HEK293T (cell line): ENCODE measurements at regions of chr7 and their contacts with region 1.

Region 1: GRCh38 chr7:25849500-25850184 is 302.4 kb upstream of the NFE2L3 start:
- DNase-seq: no peak

Region 2: DNA sequence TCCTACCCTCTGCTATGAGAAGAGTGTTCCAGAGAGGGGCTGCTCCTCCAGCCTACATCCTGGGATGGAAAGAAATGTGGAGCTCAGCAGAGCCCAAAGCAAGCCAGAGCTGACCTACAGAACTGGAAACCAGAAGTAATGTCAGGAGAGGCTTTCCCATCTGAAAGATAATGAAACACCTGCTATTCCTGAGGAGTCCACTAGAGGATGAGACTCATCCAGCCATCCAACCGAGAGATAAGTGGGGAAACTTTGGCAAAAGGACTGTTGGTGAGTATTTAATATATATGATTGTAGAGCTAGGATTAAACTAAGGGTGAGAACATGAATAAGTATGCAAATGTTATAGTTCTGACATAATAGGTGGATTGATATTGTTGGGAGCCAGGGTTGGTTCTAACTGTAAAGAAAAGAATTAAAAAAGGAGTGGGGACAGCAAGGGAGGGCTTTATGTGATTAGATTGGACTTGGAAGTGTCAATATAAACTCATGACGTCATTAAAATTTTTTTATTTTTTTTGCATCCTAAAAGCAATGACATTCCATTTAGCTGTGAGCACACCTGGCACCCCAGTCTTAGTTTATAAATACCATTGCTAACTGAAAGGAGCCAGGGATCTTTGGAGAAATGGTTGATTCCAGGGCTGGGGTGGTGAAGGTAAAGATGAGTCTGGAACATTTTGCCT is 10.4 kb before region 1 on chr7:
- CTCF ChIA-PET with region 1: interaction called, 10 read pairs
- POLR2A ChIA-PET with region 1: interaction called, 4 read pairs
- DNase-seq: peak; percentile 44